Breast epithelium (tissue), 4 donors: ENCODE measurements at regions of chr14 and their contacts with region 1.

Region 1: DNA sequence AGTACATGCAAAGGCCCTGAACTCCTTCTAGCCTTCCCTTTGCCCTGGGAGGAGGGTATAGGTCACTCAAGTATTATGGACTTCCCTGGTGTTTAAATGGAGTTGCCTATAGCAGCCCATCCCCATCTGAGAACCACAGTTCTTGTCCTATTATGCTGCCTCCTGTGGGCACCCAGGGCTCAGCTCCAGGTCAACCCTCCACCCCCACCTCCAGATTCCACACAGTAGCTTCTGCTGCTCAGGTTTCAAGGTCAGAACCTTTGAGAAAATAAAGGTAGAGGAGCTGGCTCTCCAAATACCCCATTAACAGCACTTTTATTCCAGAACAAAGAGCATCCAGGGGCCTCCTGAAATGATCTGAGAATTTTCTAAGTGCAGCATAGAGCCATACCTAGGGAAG is 57.4 kb downstream of the ACTN1 start:
- DNase-seq: no peak
- H3K4me3 ChIP-seq: no peak overlapping the region
- H3K27ac ChIP-seq: peak overlapping the region; percentile 64 to 73
- H3K4me1 ChIP-seq: peaks cover 0 to 23% of the 10 kb centered on the region in 2 donors
- H3K27me3 ChIP-seq: no peaks in the 10 kb centered on the region
- CTCF ChIP-seq: no peak
- POLR2A ChIP-seq: no peak

Region 2: DNA sequence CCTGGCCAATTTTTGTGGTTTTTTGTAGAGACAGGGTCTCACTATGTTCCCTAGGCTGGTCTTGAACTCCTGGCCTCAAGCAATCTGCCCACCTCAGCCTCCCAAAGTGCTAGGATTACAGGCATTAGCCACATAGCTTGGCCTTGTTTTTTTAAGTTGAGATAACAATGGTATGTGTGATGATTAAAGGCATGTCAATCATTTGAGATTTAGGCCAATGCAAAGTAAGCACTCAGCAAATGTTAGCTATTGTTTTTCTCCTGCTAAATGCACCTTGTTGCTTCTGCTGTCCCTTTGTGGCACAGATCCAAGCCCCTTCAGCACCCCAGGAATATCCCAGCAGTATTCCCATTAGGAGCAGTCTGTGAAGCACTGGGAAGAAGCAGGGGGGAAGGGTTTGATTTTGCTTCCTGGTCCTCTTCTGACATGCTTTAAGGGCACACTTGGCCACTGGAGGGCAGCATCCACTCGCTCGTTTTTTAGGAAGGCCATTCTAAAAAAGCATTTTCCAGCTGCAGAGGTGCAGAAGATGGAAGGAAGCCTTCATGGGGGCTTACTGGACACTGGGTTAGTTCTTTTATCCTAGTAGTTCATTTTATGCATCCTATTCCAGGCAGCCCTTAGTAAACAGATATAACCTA is 58.6 kb before region 1 on chr14:
- intact Hi-C with region 1: no loop called
- DNase-seq: peak; percentile 67 to 77
- H3K4me3 ChIP-seq: no peak overlapping the region
- H3K27ac ChIP-seq: no peak overlapping the region
- H3K4me1 ChIP-seq: no peaks in the 10 kb centered on the region
- H3K27me3 ChIP-seq: no peaks in the 10 kb centered on the region
- CTCF ChIP-seq: peak; percentile 62 to 86 (median 78)
- POLR2A ChIP-seq: no peak

Region 3: DNA sequence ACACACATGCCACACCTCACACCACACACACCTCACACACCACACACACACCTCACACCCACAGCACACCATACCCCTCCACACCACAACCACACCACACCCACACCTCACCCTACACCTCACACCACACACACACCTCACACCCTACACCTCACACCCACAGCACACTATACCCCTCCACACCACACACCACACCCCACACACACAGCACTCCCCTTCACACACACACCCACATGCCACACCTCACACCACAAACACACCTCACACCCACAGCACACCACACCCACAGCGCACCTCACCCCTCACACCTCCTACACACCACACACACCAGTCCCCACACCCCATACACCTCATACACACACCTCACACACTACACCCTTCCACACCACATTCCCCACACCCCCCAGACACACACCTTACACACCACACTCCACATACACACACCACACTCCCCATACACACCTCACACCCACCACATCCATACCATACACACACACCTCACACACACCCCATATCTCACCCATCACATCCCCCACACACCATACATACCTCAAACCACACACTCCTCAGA is 22.5 kb before region 1 on chr14:
- intact Hi-C with region 1: loop called (anchors 1 kb)
- DNase-seq: no peak
- H3K4me3 ChIP-seq: no peak overlapping the region
- H3K27ac ChIP-seq: peak overlapping the region; percentile 58 to 68
- H3K4me1 ChIP-seq: no peaks in the 10 kb centered on the region
- H3K27me3 ChIP-seq: no peaks in the 10 kb centered on the region
- CTCF ChIP-seq: no peak
- POLR2A ChIP-seq: no peak

Region 4: GRCh38 chr14:68952531-68953195 is 31.0 kb after region 1 on chr14:
- intact Hi-C with region 1: loop called (anchors 1 kb)
- DNase-seq: no peak
- H3K4me3 ChIP-seq: peak overlapping the region in 2 of 3 donors; percentile 9 to 45
- H3K27ac ChIP-seq: peak overlapping the region; percentile 83 to 84
- H3K4me1 ChIP-seq: peaks cover 45 to 71% of the 10 kb centered on the region in 2 donors
- H3K27me3 ChIP-seq: no peaks in the 10 kb centered on the region
- CTCF ChIP-seq: no peak
- POLR2A ChIP-seq: peak; percentile 13